Astrocyte of the cerebellum (primary cell): ENCODE measurements at regions of chr3 and their contacts with region 1.

Region 1: DNA sequence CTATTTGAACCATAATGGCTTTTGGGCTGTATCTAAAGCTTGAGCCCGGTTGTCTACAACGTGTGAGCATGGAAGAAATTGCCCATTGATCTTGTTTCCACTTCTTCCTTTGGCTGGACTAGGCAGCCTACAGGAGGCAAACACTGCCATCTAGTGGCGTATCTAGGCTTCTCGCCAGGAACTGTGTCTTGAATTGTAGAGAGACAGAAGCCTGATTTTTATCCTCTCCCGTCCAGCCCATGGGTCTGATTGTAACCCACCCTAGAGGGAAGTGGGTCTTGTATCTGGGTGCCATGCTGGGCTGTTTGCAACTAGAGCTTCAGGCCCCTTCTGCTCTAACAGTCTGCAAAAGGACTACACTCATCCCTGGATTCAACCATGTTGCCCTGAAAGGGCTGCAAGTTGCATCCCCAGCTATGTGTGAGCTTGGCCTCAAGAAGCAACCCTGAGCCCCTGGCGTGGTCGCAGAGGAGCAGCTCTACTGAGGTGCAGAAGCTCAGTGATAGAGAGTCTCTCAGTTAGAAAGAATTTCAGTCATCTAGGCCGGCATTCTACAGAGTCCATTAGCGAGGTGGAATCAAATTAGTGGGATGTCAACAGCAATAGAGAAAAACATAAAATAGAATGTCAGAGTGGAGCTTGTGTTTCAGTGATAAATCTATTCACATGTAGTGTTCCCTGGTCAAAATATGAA is 170.2 kb upstream of the UMPS start:
- DNase-seq: peak; percentile 78
- H3K4me3 ChIP-seq: no peak overlapping the region
- CTCF ChIP-seq: peak; percentile 93

Region 2: GRCh38 chr3:124699686-124700396 is 139.8 kb after region 1 on chr3:
- in situ Hi-C with region 1: loop called (anchors 10 kb)
- DNase-seq: no peak
- H3K4me3 ChIP-seq: no peak overlapping the region
- CTCF ChIP-seq: no peak